ENCODE measurements at regions of chr4 and their contacts with region 1.

Region 1: GRCh38 chr4:163494360-163495162 is at the start of gene TMA16:
- DNase-seq: peak; percentile 92
- H3K4me3 Mint-ChIP-seq: peak within 1 kb of the TSS; percentile 99
- H3K27ac Mint-ChIP-seq: peak within 1 kb of the TSS; percentile 100
- H3K4me1 Mint-ChIP-seq: peaks cover 27% of the 10 kb centered on the region
- H3K27me3 Mint-ChIP-seq: peaks cover 2% of the 10 kb centered on the region
- total RNA-seq, gene TMA16: 46.0 to 52.0 TPM

Region 2: DNA sequence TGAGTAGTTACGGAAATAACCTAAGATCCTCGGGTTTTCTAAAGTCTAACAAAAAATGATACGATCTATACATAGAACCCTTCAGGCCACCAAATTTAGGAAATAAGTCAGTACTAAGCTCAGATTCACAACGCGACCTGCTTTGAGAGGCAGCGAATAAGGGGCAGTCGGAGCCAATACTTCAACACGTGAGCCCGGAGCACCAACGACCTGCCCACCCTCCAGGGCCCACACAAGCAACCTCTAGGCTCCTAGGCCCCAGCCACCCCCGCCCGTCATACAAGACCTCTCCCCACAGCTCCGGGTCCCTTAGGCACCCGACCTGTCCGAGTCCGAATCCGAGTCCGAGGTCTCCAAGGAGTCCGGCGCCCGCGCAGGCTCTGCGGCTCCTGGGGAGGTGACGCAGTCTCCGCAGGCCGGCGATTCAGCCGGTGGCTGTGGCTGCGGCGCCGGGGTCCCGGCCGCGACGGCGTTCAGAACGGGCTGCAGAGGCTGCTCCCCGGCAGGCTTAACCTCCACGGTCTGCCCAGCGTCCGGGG is 328.5 kb before region 1 on chr4:
- CTCF ChIA-PET with region 1: interaction called, 6 read pairs
- POLR2A ChIA-PET with region 1: interaction called, 12 read pairs
- intact Hi-C with region 1: loop called (anchors 1 kb)
- DNase-seq: peak; percentile 71
- H3K4me3 Mint-ChIP-seq: peak overlapping the region; percentile 75
- H3K27ac Mint-ChIP-seq: peak overlapping the region; percentile 93
- H3K4me1 Mint-ChIP-seq: peaks cover 41% of the 10 kb centered on the region
- H3K27me3 Mint-ChIP-seq: no peaks in the 10 kb centered on the region

Region 3: DNA sequence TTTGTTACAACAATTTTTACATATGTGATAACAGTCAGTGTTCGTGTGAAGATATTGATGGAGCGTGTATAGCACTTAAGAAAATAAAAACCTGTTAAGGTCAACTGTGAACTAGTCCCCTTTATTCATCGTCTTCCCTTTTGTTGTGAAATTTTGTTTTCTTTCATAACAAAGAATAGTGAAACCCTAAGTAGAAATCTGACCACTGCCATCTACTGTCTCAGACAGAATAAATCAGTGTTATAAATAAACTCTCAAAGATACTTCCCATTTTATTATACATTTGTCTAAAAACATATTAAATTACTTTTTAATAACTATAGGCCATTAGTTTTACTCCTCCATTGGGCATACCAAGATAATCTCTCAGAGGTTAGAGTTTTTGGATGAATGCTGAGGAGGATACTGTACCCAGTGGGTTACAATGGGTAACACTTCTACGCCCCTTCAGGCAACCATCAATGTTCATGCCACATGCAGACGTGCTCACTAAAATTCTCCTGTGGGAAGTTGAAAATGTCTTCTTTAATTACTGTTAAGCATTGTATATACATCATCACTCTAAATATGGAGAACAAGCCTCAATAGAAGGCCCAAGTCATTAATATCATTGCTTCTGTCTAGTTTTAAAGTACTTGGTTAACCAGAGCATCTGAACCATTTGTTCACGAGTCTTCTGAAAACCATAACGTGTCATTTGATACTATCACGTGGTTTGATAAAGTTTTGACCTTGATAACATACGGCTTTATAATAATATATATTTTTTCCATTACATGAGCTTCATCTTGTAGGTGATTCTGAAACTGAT is 171.2 kb after region 1 on chr4:
- CTCF ChIA-PET with region 1: no interaction called
- POLR2A ChIA-PET with region 1: no interaction called
- intact Hi-C with region 1: loop called (anchors 5 kb)
- DNase-seq: no peak
- H3K4me3 Mint-ChIP-seq: no peak overlapping the region
- H3K27ac Mint-ChIP-seq: no peak overlapping the region
- H3K4me1 Mint-ChIP-seq: peaks cover 46% of the 10 kb centered on the region
- H3K27me3 Mint-ChIP-seq: no peaks in the 10 kb centered on the region

Region 4: GRCh38 chr4:165207431-165208220 is 1713.1 kb after region 1 on chr4 and contains the start of gene KLHL2:
- CTCF ChIA-PET with region 1: no interaction called
- POLR2A ChIA-PET with region 1: no interaction called
- intact Hi-C with region 1: loop called (anchors 10 kb)
- DNase-seq: peak; percentile 74
- H3K4me3 Mint-ChIP-seq: peak within 1 kb of the TSS; percentile 88
- H3K27ac Mint-ChIP-seq: peak within 1 kb of the TSS; percentile 86
- H3K4me1 Mint-ChIP-seq: peaks cover 65% of the 10 kb centered on the region
- H3K27me3 Mint-ChIP-seq: no peaks in the 10 kb centered on the region
- total RNA-seq, gene KLHL2: 25.0 to 26.0 TPM